CD8-positive, alpha-beta T cell (primary cell): ENCODE measurements at regions of chr3 and their contacts with region 1.

Region 1: GRCh38 chr3:13884851-13885703 is 5.2 kb upstream of the WNT7A start:
- DNase-seq: peak in 8 of 9 experiments; percentile 59 to 81 (median 77)
- ATAC-seq: peak; percentile 80
- H3K4me3 ChIP-seq: no peak overlapping the region
- H3K4me3 Mint-ChIP-seq: no peak overlapping the region
- H3K27ac ChIP-seq: no peak overlapping the region
- H3K27ac Mint-ChIP-seq: no peak overlapping the region
- H3K4me1 ChIP-seq: peaks cover 16% of the 10 kb centered on the region
- H3K4me1 Mint-ChIP-seq: peaks cover 16% of the 10 kb centered on the region
- H3K27me3 ChIP-seq: peaks cover 0 to 4% of the 10 kb centered on the region in 2 experiments
- H3K27me3 Mint-ChIP-seq: peaks cover 24% of the 10 kb centered on the region
- CTCF ChIP-seq: peak; percentile 88

Region 2: DNA sequence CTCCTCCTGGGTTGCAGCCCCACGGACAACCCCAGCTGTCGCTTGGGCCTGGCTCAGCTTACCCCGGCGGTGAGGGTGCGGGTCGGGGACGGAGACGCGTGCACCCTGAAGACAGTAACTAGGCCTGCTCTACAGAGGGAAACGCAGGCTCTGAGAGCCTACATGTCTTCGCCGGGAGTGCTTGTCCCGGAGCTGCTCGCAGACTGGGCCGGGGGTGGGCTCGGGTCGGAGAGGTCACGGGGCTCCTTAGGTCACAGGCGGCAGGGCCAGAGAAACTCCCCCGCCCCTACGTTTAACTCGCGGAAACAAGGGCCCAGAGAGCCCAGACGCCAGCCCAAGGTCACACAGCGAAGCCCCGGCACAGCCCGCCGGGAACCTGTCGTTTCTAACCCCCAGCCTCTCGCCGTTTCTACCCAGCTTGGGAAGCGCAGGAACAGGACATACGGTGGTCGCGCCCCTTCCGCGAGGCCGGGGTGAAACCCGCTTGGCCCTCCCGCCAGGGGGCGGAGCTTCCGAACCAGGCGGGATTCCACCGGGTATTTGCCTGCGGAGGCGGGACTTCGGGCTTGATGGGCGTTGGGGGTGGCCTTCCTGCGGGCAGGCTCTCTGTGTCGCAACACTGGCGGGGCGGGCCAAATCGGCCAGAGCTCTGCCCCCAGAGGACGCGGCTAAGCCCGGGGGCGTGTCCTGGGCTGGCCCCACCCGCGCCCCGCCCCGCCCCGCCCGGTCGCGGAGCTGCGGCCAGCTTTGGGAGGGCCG is 405.3 kb before region 1 on chr3 and contains the start of gene HDAC11:
- CTCF ChIA-PET with region 1: interaction called, 5 read pairs
- POLR2A ChIA-PET with region 1: interaction called, 3 read pairs
- intact Hi-C with region 1: loop called in 1 of 2 experiments (anchors 5 kb)
- DNase-seq: peak; percentile 95 to 99 (median 98)
- ATAC-seq: peak; percentile 93
- H3K4me3 ChIP-seq: peak within 1 kb of the TSS; percentile 83 to 96
- H3K4me3 Mint-ChIP-seq: peak within 1 kb of the TSS; percentile 95
- H3K27ac ChIP-seq: peak within 1 kb of the TSS; percentile 90
- H3K27ac Mint-ChIP-seq: peak within 1 kb of the TSS; percentile 96
- H3K4me1 ChIP-seq: peaks cover 18% of the 10 kb centered on the region
- H3K4me1 Mint-ChIP-seq: peaks cover 17% of the 10 kb centered on the region
- H3K27me3 ChIP-seq: no peaks in the 10 kb centered on the region
- H3K27me3 Mint-ChIP-seq: no peaks in the 10 kb centered on the region
- CTCF ChIP-seq: no peak
- total RNA-seq, gene HDAC11: 4.6 to 5.8 TPM

Region 3: GRCh38 chr3:13648060-13649001 is 236.7 kb before region 1 on chr3:
- CTCF ChIA-PET with region 1: interaction called, 670 read pairs
- POLR2A ChIA-PET with region 1: interaction called, 3 read pairs
- intact Hi-C with region 1: no loop called
- DNase-seq: peak; percentile 56 to 88 (median 75)
- ATAC-seq: peak; percentile 27
- H3K4me3 ChIP-seq: no peak overlapping the region
- H3K4me3 Mint-ChIP-seq: no peak overlapping the region
- H3K27ac ChIP-seq: no peak overlapping the region
- H3K27ac Mint-ChIP-seq: no peak overlapping the region
- H3K4me1 ChIP-seq: peaks cover 33% of the 10 kb centered on the region
- H3K4me1 Mint-ChIP-seq: peaks cover 39% of the 10 kb centered on the region
- H3K27me3 ChIP-seq: peaks cover 0 to 3% of the 10 kb centered on the region in 2 experiments
- H3K27me3 Mint-ChIP-seq: peaks cover 15% of the 10 kb centered on the region
- CTCF ChIP-seq: peak; percentile 94

Region 4: DNA sequence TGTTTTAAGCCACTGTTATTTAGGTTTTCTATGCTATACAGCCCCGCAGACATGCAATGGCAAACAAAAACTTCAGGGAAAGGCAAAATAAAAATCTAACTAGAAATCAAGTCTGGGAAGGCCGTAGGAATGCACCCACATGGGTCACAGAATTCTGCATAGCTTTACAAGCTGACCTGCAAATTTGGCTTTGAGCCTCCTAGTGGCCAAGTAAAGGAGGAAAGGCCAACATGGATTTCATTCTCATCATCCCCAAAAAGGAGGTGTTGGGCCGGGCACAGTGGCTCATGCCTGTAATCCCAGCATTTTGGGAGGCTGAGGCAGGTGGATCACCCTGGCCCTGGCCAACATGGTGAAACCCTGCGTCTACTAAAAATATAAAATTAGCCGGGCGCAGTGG is 211.9 kb before region 1 on chr3:
- CTCF ChIA-PET with region 1: interaction called, 11 read pairs
- POLR2A ChIA-PET with region 1: interaction called, 3 read pairs
- intact Hi-C with region 1: no loop called
- DNase-seq: no peak
- ATAC-seq: no peak
- H3K4me3 ChIP-seq: no peak overlapping the region
- H3K4me3 Mint-ChIP-seq: no peak overlapping the region
- H3K27ac ChIP-seq: no peak overlapping the region
- H3K27ac Mint-ChIP-seq: no peak overlapping the region
- H3K4me1 ChIP-seq: no peaks in the 10 kb centered on the region
- H3K4me1 Mint-ChIP-seq: no peaks in the 10 kb centered on the region
- H3K27me3 ChIP-seq: no peaks in the 10 kb centered on the region
- H3K27me3 Mint-ChIP-seq: peaks cover 8% of the 10 kb centered on the region
- CTCF ChIP-seq: no peak

Region 5: GRCh38 chr3:13825311-13826220 is 59.5 kb before region 1 on chr3:
- CTCF ChIA-PET with region 1: interaction called, 18 read pairs
- POLR2A ChIA-PET with region 1: no interaction called
- intact Hi-C with region 1: loop called in 1 of 2 experiments (anchors 1 kb)
- DNase-seq: no peak
- ATAC-seq: no peak
- H3K4me3 ChIP-seq: no peak overlapping the region
- H3K4me3 Mint-ChIP-seq: no peak overlapping the region
- H3K27ac ChIP-seq: no peak overlapping the region
- H3K27ac Mint-ChIP-seq: no peak overlapping the region
- H3K4me1 ChIP-seq: no peaks in the 10 kb centered on the region
- H3K4me1 Mint-ChIP-seq: no peaks in the 10 kb centered on the region
- H3K27me3 ChIP-seq: no peaks in the 10 kb centered on the region
- H3K27me3 Mint-ChIP-seq: no peaks in the 10 kb centered on the region
- CTCF ChIP-seq: no peak

Region 6: DNA sequence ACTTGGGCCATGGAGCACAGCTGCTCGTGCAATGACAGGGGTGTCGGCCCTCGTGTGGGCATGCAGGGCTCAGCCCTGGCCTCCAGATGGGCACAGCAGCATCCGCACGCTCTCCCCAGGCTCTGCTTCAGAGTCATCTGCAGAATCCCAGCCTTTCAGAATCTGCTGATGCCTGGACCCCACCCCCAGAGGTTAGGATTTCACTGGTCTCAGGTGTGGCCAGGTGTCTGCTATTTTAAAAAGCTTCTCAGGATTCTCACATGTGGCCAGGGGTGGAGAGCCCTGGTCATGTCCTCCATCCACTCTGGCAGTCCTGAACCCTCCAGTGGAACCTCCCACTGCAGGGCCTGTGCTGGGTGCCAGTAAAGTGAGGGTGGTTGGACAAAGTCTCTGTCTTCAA is 48.8 kb before region 1 on chr3:
- CTCF ChIA-PET with region 1: no interaction called
- POLR2A ChIA-PET with region 1: no interaction called
- intact Hi-C with region 1: no loop called
- DNase-seq: no peak
- ATAC-seq: no peak
- H3K4me3 ChIP-seq: no peak overlapping the region
- H3K4me3 Mint-ChIP-seq: no peak overlapping the region
- H3K27ac ChIP-seq: no peak overlapping the region
- H3K27ac Mint-ChIP-seq: no peak overlapping the region
- H3K4me1 ChIP-seq: no peaks in the 10 kb centered on the region
- H3K4me1 Mint-ChIP-seq: peaks cover 4% of the 10 kb centered on the region
- H3K27me3 ChIP-seq: no peaks in the 10 kb centered on the region
- H3K27me3 Mint-ChIP-seq: peaks cover 8% of the 10 kb centered on the region
- CTCF ChIP-seq: no peak

Region 7: DNA sequence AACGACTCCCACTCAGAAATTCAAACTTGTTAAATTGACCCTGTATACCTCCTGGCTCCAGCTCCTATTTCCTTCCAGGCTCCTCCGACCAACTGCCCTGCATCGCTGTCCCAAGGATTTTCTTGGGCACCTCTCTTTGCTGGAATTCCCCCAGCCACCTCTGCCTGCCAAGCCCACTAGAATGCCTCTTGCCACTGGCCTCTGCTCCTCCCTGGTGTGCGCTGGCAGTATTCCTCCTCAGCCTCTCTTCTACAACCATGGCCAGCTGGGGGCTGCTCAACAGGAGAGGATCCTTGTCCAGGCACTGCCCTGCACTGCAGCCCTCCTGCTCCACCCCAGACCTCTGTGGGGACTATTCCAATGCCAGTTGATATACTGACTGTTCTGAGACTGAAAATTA is 12.6 kb before region 1 on chr3:
- CTCF ChIA-PET with region 1: interaction called, 26 read pairs
- POLR2A ChIA-PET with region 1: no interaction called
- intact Hi-C with region 1: no loop called
- DNase-seq: no peak
- ATAC-seq: no peak
- H3K4me3 ChIP-seq: no peak overlapping the region
- H3K4me3 Mint-ChIP-seq: no peak overlapping the region
- H3K27ac ChIP-seq: no peak overlapping the region
- H3K27ac Mint-ChIP-seq: no peak overlapping the region
- H3K4me1 ChIP-seq: peaks cover 18% of the 10 kb centered on the region
- H3K4me1 Mint-ChIP-seq: peaks cover 17% of the 10 kb centered on the region
- H3K27me3 ChIP-seq: no peaks in the 10 kb centered on the region
- H3K27me3 Mint-ChIP-seq: peaks cover 5% of the 10 kb centered on the region
- CTCF ChIP-seq: no peak

Region 8: GRCh38 chr3:15387735-15388134 is 1502.7 kb after region 1 on chr3:
- CTCF ChIA-PET with region 1: no interaction called
- POLR2A ChIA-PET with region 1: no interaction called
- intact Hi-C with region 1: no loop called
- DNase-seq: no peak
- ATAC-seq: no peak
- H3K4me3 ChIP-seq: no peak overlapping the region
- H3K4me3 Mint-ChIP-seq: no peak overlapping the region
- H3K27ac ChIP-seq: no peak overlapping the region
- H3K27ac Mint-ChIP-seq: no peak overlapping the region
- H3K4me1 ChIP-seq: no peaks in the 10 kb centered on the region
- H3K4me1 Mint-ChIP-seq: no peaks in the 10 kb centered on the region
- H3K27me3 ChIP-seq: no peaks in the 10 kb centered on the region
- H3K27me3 Mint-ChIP-seq: no peaks in the 10 kb centered on the region
- CTCF ChIP-seq: no peak